Aorta (tissue), 5 donors: ENCODE measurements at regions of chr4 and their contacts with region 1.

Region 1: DNA sequence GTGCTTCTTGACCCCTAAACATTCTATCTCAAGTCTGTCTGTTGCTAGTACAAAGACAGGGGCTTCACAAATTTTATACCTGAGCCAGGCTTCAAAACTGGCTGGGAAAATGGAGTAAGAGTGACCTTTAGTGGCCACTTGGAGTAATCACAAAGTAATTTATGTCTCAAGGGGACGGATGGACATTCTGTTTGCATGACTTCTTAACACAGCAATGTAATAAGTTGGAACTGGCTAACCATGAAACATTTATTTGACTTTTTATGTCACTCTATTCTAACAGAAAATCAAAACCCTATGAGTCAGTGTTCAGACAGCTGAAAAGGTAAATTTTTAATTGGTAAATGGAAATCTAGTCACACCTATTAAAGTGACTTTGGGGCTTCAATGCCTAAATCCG is 600.6 kb downstream of the ANKRD50 start:
- DNase-seq: no peak
- ATAC-seq: peak; percentile 81
- H3K4me3 ChIP-seq: no peak overlapping the region
- H3K27ac ChIP-seq: no peak overlapping the region
- H3K4me1 ChIP-seq: no peaks in the 10 kb centered on the region
- H3K27me3 ChIP-seq: no peaks in the 10 kb centered on the region

Region 2: DNA sequence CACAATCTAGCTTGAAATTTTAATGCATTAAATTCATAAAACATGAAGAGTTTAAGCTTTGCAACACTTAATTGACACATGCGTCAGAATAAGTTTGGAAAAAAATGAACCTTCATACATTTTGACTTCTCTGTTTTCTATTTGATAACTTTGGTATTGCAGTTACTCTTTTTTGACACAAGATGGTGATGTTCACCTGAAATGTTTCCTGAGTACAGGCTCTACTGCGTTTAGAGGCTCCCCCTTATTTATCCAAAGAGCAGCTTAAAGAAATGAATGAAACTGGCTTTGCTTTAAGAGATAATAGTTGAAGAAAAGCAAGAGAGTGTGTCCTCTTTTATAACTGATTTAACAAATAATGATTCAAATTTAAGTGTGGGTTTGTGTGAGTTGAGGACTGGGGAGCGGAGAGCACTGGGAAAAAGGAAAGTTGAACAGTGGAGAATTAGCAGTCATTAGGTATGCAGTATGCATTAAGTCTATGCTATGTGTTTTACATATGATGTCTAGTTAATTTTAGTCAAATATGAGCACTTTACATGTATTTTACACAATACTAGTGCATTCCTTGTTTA is 1008.9 kb before region 1 on chr4:
- intact Hi-C with region 1: loop called (anchors 5 to 10 kb)
- DNase-seq: no peak
- ATAC-seq: peak; percentile 74
- H3K4me3 ChIP-seq: no peak overlapping the region
- H3K27ac ChIP-seq: no peak overlapping the region
- H3K4me1 ChIP-seq: no peaks in the 10 kb centered on the region
- H3K27me3 ChIP-seq: no peaks in the 10 kb centered on the region

Region 3: GRCh38 chr4:123776254-123776653 is 335.7 kb before region 1 on chr4:
- intact Hi-C with region 1: loop called (anchors 5 to 10 kb)
- DNase-seq: no peak
- ATAC-seq: no peak
- H3K4me3 ChIP-seq: no peak overlapping the region
- H3K27ac ChIP-seq: no peak overlapping the region
- H3K4me1 ChIP-seq: no peaks in the 10 kb centered on the region
- H3K27me3 ChIP-seq: no peaks in the 10 kb centered on the region